ENCODE measurements at regions of chr16 and their contacts with region 1.

Region 1: GRCh38 chr16:28823872-28824716 is 1.3 kb downstream of the ATXN2L start:
- DNase-seq: peak; percentile 94 to 98
- ATAC-seq: peak; percentile 61 to 77 (median 68)
- H3K4me3 ChIP-seq: peak overlapping the region; percentile 90
- H3K4me3 Mint-ChIP-seq: peak overlapping the region; percentile 94
- H3K27ac ChIP-seq: peak overlapping the region; percentile 98
- H3K27ac Mint-ChIP-seq: peak overlapping the region; percentile 96 to 99
- H3K4me1 ChIP-seq: peaks cover 20% of the 10 kb centered on the region
- H3K4me1 Mint-ChIP-seq: peaks cover 33 to 36% of the 10 kb centered on the region in 2 donors
- H3K27me3 ChIP-seq: no peaks in the 10 kb centered on the region
- H3K27me3 Mint-ChIP-seq: no peaks in the 10 kb centered on the region
- CTCF ChIP-seq: no peak

Region 2: DNA sequence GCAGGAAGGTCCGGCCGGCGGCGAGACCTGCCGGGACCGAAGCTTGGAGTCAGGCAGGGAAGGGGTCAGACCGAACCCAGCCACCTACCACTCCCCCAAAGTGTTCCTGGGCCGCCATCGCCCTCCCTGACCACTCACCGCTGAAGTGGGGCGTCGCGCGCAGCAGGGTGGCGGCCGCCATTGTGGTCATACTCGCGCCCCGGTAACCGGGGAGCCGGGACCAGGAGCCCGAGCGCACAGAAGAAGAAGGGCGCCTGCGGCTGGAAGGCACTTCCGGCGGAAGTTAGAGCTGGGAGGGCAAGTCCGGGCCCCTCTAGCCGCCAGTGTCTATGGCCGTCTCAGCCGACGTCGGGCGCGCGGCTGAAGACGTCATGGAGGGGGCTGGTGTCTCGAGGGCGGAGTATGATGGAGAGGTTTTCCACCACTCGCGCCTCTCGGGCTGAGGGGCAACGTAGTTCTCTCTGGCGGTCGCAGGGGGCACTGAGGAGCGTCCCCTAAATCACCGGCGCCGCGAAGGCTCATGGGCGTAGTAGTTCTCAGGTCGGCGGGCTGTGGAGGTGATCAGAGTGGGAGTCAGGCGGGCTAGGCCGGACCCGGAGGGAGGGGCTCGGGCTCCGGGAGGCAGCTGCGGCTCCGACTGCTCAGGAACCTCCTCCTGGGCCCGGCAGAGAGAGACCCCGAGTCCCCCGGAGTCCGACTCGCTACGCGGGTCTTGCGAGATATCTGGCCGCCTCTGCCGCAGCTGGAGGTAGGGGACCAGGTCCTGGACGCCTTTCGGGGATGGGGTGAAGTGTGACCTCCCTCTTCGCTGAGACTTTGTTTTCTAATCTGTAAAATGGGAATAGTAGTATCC is 22.2 kb after region 1 on chr16 and contains the start of gene TUFM:
- intact Hi-C with region 1: loop called (anchors 1 kb)
- DNase-seq: peak; percentile 97 to 99
- ATAC-seq: peak; percentile 96 to 99 (median 96)
- H3K4me3 ChIP-seq: peak within 1 kb of the TSS; percentile 98
- H3K4me3 Mint-ChIP-seq: peak within 1 kb of the TSS; percentile 97
- H3K27ac ChIP-seq: peak within 1 kb of the TSS; percentile 92
- H3K27ac Mint-ChIP-seq: peak within 1 kb of the TSS; percentile 95 to 99
- H3K4me1 ChIP-seq: peaks cover 30% of the 10 kb centered on the region
- H3K4me1 Mint-ChIP-seq: peaks cover 25 to 32% of the 10 kb centered on the region in 2 donors
- H3K27me3 ChIP-seq: no peaks in the 10 kb centered on the region
- H3K27me3 Mint-ChIP-seq: no peaks in the 10 kb centered on the region
- CTCF ChIP-seq: peak; percentile 71
- total RNA-seq, gene TUFM: 108 to 128 (median 118) TPM

Region 3: DNA sequence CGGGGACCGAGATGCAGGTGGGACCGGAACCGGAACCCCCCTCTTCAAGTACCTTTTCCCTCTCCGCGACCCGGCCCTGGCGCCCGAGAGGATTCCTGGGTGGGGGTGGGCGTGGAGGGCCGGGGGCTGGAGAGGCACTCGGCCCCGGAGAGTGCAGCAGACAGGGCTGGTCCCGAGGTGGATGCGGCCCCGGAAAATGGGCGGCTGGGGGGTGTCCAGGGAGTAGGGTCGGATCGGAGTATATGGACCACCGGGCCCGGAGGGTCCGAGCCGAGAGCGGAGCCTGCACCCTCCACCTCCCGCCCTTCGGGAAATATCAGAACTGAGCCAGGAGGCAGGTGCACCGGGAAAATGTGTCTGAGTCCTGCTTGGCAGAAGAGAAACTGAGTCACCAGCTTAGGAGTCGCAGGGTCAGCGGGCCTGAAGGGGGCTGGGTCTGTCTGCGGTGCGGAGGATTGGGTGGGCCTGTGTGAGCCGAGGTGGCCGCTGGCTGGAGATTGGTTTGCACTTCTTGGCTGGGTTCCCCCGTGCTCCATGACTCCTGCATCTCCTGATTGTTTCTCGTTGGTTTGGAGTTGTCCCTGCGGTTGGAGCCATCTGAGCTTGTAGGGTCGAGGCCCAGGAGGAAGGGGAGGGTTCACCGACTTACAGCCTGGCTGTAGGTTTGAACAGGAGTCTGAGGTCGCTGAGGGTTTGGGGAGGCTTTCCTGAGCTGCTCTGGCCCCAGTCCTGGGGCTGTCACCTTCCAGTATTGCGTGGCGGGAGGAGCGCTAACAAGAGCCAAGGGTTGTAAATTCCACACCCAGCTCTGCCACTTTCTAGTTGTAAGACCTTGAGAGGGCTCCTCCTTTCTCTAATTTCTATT is 40.1 kb after region 1 on chr16:
- intact Hi-C with region 1: loop called (anchors 5 kb)
- DNase-seq: peak in 1 of 2 donors; percentile 67
- ATAC-seq: no peak
- H3K4me3 ChIP-seq: peak overlapping the region; percentile 99
- H3K4me3 Mint-ChIP-seq: peak overlapping the region; percentile 98
- H3K27ac ChIP-seq: peak overlapping the region; percentile 98
- H3K27ac Mint-ChIP-seq: peak overlapping the region; percentile 95 to 96
- H3K4me1 ChIP-seq: peaks cover 29% of the 10 kb centered on the region
- H3K4me1 Mint-ChIP-seq: peaks cover 18 to 40% of the 10 kb centered on the region in 2 donors
- H3K27me3 ChIP-seq: no peaks in the 10 kb centered on the region
- H3K27me3 Mint-ChIP-seq: no peaks in the 10 kb centered on the region
- CTCF ChIP-seq: no peak

Region 4: GRCh38 chr16:28915181-28915580 is 91.1 kb after region 1 on chr16:
- intact Hi-C with region 1: no loop called
- DNase-seq: no peak
- ATAC-seq: no peak
- H3K4me3 ChIP-seq: no peak overlapping the region
- H3K4me3 Mint-ChIP-seq: no peak overlapping the region
- H3K27ac ChIP-seq: no peak overlapping the region
- H3K27ac Mint-ChIP-seq: no peak overlapping the region
- H3K4me1 ChIP-seq: no peaks in the 10 kb centered on the region
- H3K4me1 Mint-ChIP-seq: peaks cover 0 to 5% of the 10 kb centered on the region in 2 donors
- H3K27me3 ChIP-seq: no peaks in the 10 kb centered on the region
- H3K27me3 Mint-ChIP-seq: no peaks in the 10 kb centered on the region
- CTCF ChIP-seq: no peak

Region 5: GRCh38 chr16:28943281-28943680 is 119.2 kb after region 1 on chr16:
- intact Hi-C with region 1: loop called (anchors 5 kb)
- DNase-seq: no peak
- ATAC-seq: no peak
- H3K4me3 ChIP-seq: no peak overlapping the region
- H3K4me3 Mint-ChIP-seq: no peak overlapping the region
- H3K27ac ChIP-seq: no peak overlapping the region
- H3K27ac Mint-ChIP-seq: no peak overlapping the region
- H3K4me1 ChIP-seq: peaks cover 12% of the 10 kb centered on the region
- H3K4me1 Mint-ChIP-seq: peaks cover 8 to 13% of the 10 kb centered on the region in 2 donors
- H3K27me3 ChIP-seq: no peaks in the 10 kb centered on the region
- H3K27me3 Mint-ChIP-seq: no peaks in the 10 kb centered on the region
- CTCF ChIP-seq: no peak

Region 6: DNA sequence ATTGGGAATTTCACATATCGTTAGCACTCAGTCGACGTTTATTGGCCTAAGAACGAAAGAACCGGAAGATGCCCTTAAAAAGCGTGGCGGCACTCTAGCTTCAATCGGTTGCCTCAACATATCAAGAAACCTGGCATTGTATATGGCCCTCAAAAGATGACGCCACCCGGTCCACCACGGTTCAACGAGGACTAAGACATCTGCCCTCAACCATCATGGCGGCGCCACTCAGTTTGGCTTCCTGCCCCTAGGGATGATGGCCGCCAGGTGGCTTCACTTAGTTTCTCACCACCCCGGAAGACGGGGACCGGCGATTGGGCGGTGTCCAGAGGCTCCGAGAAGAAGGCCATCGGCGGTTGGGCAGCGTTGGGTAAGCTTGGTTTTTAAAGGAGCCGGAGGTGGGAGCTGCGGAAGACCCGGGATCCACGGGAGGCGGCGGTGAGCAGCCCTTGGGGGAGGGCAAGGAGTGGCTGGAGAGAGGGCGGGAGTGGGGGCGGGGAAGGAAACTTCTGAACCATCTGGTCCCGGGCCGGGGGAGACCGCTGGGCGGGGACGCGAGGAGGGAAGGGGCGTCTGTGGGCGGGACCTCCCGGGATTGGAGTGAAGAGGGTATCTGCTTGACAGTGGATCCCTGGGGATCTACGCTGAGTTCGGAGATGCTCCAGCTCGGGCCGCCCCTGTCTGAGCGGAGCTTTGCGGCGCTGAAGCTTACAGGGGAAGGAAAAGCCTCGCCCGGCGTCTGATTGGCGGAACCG is 1826.5 kb after region 1 on chr16 and contains the start of gene PRR14:
- intact Hi-C with region 1: loop called (anchors 5 kb)
- DNase-seq: peak; percentile 96 to 99
- ATAC-seq: peak; percentile 82 to 95 (median 85)
- H3K4me3 ChIP-seq: peak within 1 kb of the TSS; percentile 94
- H3K4me3 Mint-ChIP-seq: peak within 1 kb of the TSS; percentile 100
- H3K27ac ChIP-seq: peak within 1 kb of the TSS; percentile 96
- H3K27ac Mint-ChIP-seq: peak within 1 kb of the TSS; percentile 95 to 100
- H3K4me1 ChIP-seq: peaks cover 31% of the 10 kb centered on the region
- H3K4me1 Mint-ChIP-seq: peaks cover 31 to 37% of the 10 kb centered on the region in 2 donors
- H3K27me3 ChIP-seq: no peaks in the 10 kb centered on the region
- H3K27me3 Mint-ChIP-seq: no peaks in the 10 kb centered on the region
- CTCF ChIP-seq: no peak
- total RNA-seq, gene PRR14: 81.0 to 110 (median 101) TPM

Measured in natural killer cell (primary cell).